Natural killer cell (primary cell): ENCODE measurements at regions of chr5 and their contacts with region 1.

Region 1: GRCh38 chr5:154940772-154941620 is at the start of gene MRPL22:
- DNase-seq: peak; percentile 92 to 98
- ATAC-seq: peak; percentile 66 to 84 (median 69)
- H3K4me3 ChIP-seq: peak within 1 kb of the TSS; percentile 67
- H3K4me3 Mint-ChIP-seq: peak within 1 kb of the TSS; percentile 99
- H3K27ac ChIP-seq: peak within 1 kb of the TSS; percentile 82
- H3K27ac Mint-ChIP-seq: peak within 1 kb of the TSS; percentile 97 to 99
- H3K4me1 ChIP-seq: peaks cover 23% of the 10 kb centered on the region
- H3K4me1 Mint-ChIP-seq: peaks cover 30 to 40% of the 10 kb centered on the region in 2 donors
- H3K27me3 ChIP-seq: no peaks in the 10 kb centered on the region
- H3K27me3 Mint-ChIP-seq: no peaks in the 10 kb centered on the region
- CTCF ChIP-seq: no peak
- total RNA-seq, gene MRPL22: 30.5 to 38.0 (median 30.9) TPM

Region 2: DNA sequence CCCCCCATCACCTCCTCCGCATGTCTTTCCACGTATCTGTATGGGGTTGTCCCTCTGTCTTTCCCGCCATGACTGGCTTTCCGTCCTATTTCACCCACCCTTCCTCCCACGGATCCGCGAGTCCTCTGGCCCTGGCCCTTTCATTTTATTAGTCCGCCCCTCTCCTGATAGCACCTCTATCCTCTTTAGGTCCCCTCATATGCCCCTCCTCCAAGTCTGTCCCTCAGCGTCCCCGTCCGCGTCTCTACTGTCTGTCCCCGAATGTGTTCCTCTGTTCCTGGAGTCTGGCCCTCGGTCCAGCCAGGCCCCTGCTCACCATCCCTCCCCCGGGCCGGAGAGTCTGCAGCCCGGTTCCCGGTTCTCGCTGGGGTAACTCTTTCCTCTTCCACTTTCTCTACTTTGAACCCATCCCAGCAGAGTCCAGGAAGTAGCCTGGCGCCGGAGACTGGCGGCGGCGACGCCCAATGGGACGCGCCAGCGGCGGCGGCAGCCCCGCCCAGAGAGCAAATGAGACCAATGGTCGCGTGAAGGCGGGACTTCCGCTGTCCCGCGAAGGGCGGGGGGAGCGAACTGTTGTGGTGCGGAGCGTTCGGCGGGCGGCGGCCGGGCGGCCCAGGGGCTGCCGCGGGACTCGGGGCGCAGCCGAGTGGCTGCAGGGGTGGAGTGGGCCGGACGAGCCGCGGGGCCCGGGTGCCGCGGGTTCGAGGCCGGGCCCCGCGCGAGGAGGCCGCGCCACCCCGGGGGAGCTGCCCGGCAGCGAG is 495.4 kb before region 1 on chr5 and contains the start of gene SAP30L:
- intact Hi-C with region 1: loop called (anchors 5 kb)
- DNase-seq: peak; percentile 97
- ATAC-seq: peak; percentile 94 to 99 (median 95)
- H3K4me3 ChIP-seq: peak within 1 kb of the TSS; percentile 99
- H3K4me3 Mint-ChIP-seq: peak within 1 kb of the TSS; percentile 99
- H3K27ac ChIP-seq: peak within 1 kb of the TSS; percentile 76
- H3K27ac Mint-ChIP-seq: peak within 1 kb of the TSS; percentile 92 to 99
- H3K4me1 ChIP-seq: peaks cover 24% of the 10 kb centered on the region
- H3K4me1 Mint-ChIP-seq: peaks cover 56 to 68% of the 10 kb centered on the region in 2 donors
- H3K27me3 ChIP-seq: no peaks in the 10 kb centered on the region
- H3K27me3 Mint-ChIP-seq: no peaks in the 10 kb centered on the region
- CTCF ChIP-seq: no peak
- total RNA-seq, gene SAP30L: 37.0 to 48.4 (median 47.6) TPM

Region 3: DNA sequence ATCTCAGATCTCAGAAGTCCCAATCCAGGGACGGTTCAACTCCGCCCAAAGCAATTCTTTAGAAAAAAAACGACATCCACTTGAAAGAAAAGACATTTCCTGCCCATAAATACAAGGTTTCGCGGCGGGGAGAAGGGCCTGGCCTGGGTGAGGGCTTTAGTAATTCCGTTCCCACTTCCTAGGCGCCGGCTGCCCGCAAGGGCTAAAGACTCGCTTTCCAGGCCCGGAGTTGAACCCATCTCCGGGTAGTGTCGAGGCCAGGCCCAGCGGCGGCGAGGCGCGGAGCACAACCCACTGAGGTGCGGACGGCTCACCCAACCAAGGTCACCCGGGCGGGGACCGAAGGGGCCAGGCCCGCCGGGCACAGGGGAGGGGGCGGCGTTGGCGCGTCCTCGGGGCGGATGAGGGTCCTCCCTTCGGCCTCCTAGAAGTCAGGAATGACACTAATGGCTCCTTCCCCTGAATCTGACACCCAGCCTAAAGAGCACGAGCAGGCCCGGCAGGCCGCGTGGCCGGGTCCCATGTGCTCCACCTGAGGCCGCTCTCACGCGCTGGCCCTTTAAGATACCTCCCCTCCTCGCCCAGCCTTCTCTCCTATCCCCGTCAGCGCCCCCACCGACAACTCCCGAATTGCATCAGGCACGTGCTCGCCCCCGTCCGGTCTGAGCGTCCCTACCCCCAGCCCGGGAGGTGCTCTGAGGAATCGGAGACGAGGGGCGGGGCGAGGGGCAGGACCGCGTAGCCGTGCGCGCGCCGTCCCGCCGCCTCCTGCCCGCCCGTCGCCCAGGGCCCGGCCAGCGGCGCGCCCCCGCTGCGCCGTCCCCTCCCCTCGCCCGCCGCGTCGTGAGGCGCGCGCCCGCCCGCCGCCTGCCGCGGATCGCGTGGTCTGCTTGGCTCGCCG is 186.3 kb before region 1 on chr5:
- intact Hi-C with region 1: loop called (anchors 5 kb)
- DNase-seq: peak; percentile 97 to 99
- ATAC-seq: peak; percentile 86 to 97 (median 91)
- H3K4me3 ChIP-seq: peak overlapping the region; percentile 56
- H3K4me3 Mint-ChIP-seq: peak overlapping the region; percentile 86
- H3K27ac ChIP-seq: peak overlapping the region; percentile 94
- H3K27ac Mint-ChIP-seq: peak overlapping the region; percentile 89 to 90
- H3K4me1 ChIP-seq: peaks cover 22% of the 10 kb centered on the region
- H3K4me1 Mint-ChIP-seq: peaks cover 40 to 41% of the 10 kb centered on the region in 2 donors
- H3K27me3 ChIP-seq: no peaks in the 10 kb centered on the region
- H3K27me3 Mint-ChIP-seq: no peaks in the 10 kb centered on the region
- CTCF ChIP-seq: peak; percentile 42

Region 4: GRCh38 chr5:154868702-154869101 is 72.3 kb before region 1 on chr5:
- intact Hi-C with region 1: no loop called
- DNase-seq: peak in 1 of 2 donors; percentile 42
- ATAC-seq: no peak
- H3K4me3 ChIP-seq: no peak overlapping the region
- H3K4me3 Mint-ChIP-seq: no peak overlapping the region
- H3K27ac ChIP-seq: no peak overlapping the region
- H3K27ac Mint-ChIP-seq: peak overlapping the region in 1 of 2 donors; percentile 38
- H3K4me1 ChIP-seq: no peaks in the 10 kb centered on the region
- H3K4me1 Mint-ChIP-seq: peaks cover 10 to 17% of the 10 kb centered on the region in 2 donors
- H3K27me3 ChIP-seq: no peaks in the 10 kb centered on the region
- H3K27me3 Mint-ChIP-seq: no peaks in the 10 kb centered on the region
- CTCF ChIP-seq: no peak

Region 5: DNA sequence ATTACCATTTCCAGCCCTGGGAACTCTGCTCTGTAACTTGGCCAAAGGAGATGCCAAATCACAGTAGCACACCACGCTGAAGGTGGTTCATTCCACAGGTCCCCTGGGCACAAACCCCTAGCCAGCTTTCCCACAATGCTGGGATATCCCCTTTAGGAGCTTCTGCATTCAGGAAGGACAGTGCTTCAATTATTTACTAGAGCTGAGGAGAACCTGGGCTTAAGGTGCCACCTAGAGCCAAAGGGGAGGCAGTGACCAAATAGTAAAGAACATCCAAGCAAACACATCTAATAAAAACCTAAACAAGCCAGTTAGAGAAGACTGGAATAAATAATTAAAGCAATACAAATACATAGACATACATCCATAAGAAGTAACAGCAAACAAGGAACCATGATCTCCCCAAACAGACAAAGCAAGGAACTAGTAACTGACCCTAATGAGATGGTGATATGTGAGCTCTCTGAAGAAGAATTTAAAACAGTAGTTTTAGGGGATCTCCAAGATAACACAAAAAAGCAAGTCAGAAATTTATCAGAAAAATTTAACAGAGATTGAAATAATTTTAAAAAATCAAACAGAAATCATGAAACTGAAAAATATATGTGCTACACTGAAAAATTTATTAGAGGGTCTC is 87.1 kb after region 1 on chr5:
- intact Hi-C with region 1: no loop called
- DNase-seq: no peak
- ATAC-seq: no peak
- H3K4me3 ChIP-seq: no peak overlapping the region
- H3K4me3 Mint-ChIP-seq: no peak overlapping the region
- H3K27ac ChIP-seq: no peak overlapping the region
- H3K27ac Mint-ChIP-seq: no peak overlapping the region
- H3K4me1 ChIP-seq: no peaks in the 10 kb centered on the region
- H3K4me1 Mint-ChIP-seq: no peaks in the 10 kb centered on the region
- H3K27me3 ChIP-seq: no peaks in the 10 kb centered on the region
- H3K27me3 Mint-ChIP-seq: peaks cover 0 to 2% of the 10 kb centered on the region in 2 donors
- CTCF ChIP-seq: no peak